Activated CD4-positive, alpha-beta memory T cell treated with anti-CD3 and anti-CD28 coated beads for 36 hours (primary cell): ENCODE measurements at regions of chrX and their contacts with region 1.

Region 1: GRCh38 chrX:136608295-136609171 is 39.4 kb upstream of the CD40LG start:
- DNase-seq: peak; percentile 72
- H3K4me3 Mint-ChIP-seq: peak overlapping the region; percentile 41
- H3K27ac Mint-ChIP-seq: peak overlapping the region; percentile 61
- H3K4me1 Mint-ChIP-seq: peaks cover 57% of the 10 kb centered on the region
- H3K27me3 Mint-ChIP-seq: no peaks in the 10 kb centered on the region

Region 2: GRCh38 chrX:136694431-136695087 is 86.0 kb after region 1 on chrX:
- CTCF ChIA-PET with region 1: interaction called, 69 read pairs
- POLR2A ChIA-PET with region 1: interaction called, 4 read pairs
- intact Hi-C with region 1: loop called (anchors 1 kb)
- DNase-seq: no peak
- H3K4me3 Mint-ChIP-seq: peak overlapping the region; percentile 77
- H3K27ac Mint-ChIP-seq: peak overlapping the region; percentile 97
- H3K4me1 Mint-ChIP-seq: peaks cover 75% of the 10 kb centered on the region
- H3K27me3 Mint-ChIP-seq: no peaks in the 10 kb centered on the region

Region 3: GRCh38 chrX:136920001-136920400 is 311.5 kb after region 1 on chrX:
- CTCF ChIA-PET with region 1: interaction called, 3 read pairs
- POLR2A ChIA-PET with region 1: no interaction called
- intact Hi-C with region 1: loop called (anchors 5 kb)
- DNase-seq: no peak
- H3K4me3 Mint-ChIP-seq: no peak overlapping the region
- H3K27ac Mint-ChIP-seq: no peak overlapping the region
- H3K4me1 Mint-ChIP-seq: peaks cover 2% of the 10 kb centered on the region
- H3K27me3 Mint-ChIP-seq: no peaks in the 10 kb centered on the region

Region 4: GRCh38 chrX:137245183-137245582 is 636.6 kb after region 1 on chrX:
- CTCF ChIA-PET with region 1: no interaction called
- POLR2A ChIA-PET with region 1: no interaction called
- intact Hi-C with region 1: no loop called
- DNase-seq: no peak
- H3K4me3 Mint-ChIP-seq: no peak overlapping the region
- H3K27ac Mint-ChIP-seq: no peak overlapping the region
- H3K4me1 Mint-ChIP-seq: no peaks in the 10 kb centered on the region
- H3K27me3 Mint-ChIP-seq: no peaks in the 10 kb centered on the region